ENCODE measurements at regions of chr6 and their contacts with region 1.

Region 1: GRCh38 chr6:112163295-112164257 is 76.2 kb downstream of the FAM229B start:
- DNase-seq: peak; percentile 84
- ATAC-seq: peak; percentile 99
- H3K4me3 Mint-ChIP-seq: peak overlapping the region; percentile 56
- H3K27ac Mint-ChIP-seq: no peak overlapping the region
- H3K4me1 Mint-ChIP-seq: peaks cover 17% of the 10 kb centered on the region
- H3K27me3 Mint-ChIP-seq: peaks cover 49% of the 10 kb centered on the region

Region 2: DNA sequence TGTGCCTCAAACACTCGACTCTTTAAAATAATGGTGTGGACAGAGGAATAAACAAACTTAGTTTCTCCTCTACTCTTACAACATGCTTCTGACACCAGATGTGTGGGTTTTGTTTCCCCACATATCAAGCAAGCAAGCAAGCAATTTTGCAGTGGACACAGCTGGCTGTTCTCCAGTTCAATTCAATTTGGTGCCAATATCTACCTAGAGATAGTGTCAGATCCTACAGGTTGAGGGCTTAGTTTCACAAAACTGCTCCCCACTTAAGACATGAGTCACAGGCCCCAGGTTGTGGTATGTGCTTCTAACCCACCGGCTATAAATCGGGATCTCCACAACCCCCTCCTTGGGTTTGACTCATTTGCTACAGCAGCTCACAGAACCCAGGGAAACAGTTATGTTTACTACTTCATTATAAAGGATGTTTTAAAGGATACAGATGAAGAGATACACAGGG is 426.5 kb before region 1 on chr6:
- CTCF ChIA-PET with region 1: no interaction called
- POLR2A ChIA-PET with region 1: no interaction called
- DNase-seq: no peak
- ATAC-seq: peak; percentile 71
- H3K4me3 Mint-ChIP-seq: no peak overlapping the region
- H3K27ac Mint-ChIP-seq: peak overlapping the region; percentile 70
- H3K4me1 Mint-ChIP-seq: peaks cover 88% of the 10 kb centered on the region
- H3K27me3 Mint-ChIP-seq: no peaks in the 10 kb centered on the region

Region 3: GRCh38 chr6:112049026-112049799 is 114.4 kb before region 1 on chr6:
- CTCF ChIA-PET with region 1: interaction called, 14 read pairs
- POLR2A ChIA-PET with region 1: no interaction called
- DNase-seq: no peak
- ATAC-seq: no peak
- H3K4me3 Mint-ChIP-seq: no peak overlapping the region
- H3K27ac Mint-ChIP-seq: no peak overlapping the region
- H3K4me1 Mint-ChIP-seq: peaks cover 4% of the 10 kb centered on the region
- H3K27me3 Mint-ChIP-seq: peaks cover 4% of the 10 kb centered on the region

Region 4: GRCh38 chr6:112087136-112087911 is 76.3 kb before region 1 on chr6 and contains the starts of genes FAM229B and TUBE1:
- CTCF ChIA-PET with region 1: interaction called, 99 read pairs
- POLR2A ChIA-PET with region 1: interaction called, 6 read pairs
- DNase-seq: peak; percentile 95
- ATAC-seq: peak; percentile 96
- H3K4me3 Mint-ChIP-seq: no peak within 1 kb of the TSS
- H3K27ac Mint-ChIP-seq: no peak within 1 kb of the TSS
- H3K4me1 Mint-ChIP-seq: peaks cover 3% of the 10 kb centered on the region
- H3K27me3 Mint-ChIP-seq: peaks cover 22% of the 10 kb centered on the region
- total RNA-seq, gene FAM229B: 1.9 to 2.2 TPM
- total RNA-seq, gene TUBE1: 16.0 to 16.5 TPM

Region 5: DNA sequence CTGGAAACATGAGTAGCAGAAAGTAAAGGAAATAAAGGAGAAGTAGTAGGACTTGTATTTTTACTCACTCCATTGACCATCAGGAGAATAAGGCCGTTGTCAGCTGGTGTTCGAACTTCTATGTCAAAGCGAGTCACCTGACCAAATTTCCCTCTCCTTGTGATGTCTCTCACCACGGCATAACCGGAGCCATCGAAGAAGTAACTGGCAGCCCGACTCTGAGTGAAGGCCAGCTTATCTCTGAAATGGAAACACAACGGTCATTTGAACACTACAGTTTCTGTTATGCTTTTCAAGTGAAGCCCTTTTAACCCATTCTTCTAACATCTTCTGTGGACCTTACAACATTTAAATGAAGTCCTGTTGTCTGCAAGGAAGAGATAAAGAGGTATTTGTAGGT is 24.5 kb before region 1 on chr6:
- CTCF ChIA-PET with region 1: interaction called, 13 read pairs
- POLR2A ChIA-PET with region 1: interaction called, 3 read pairs
- DNase-seq: no peak
- ATAC-seq: no peak
- H3K4me3 Mint-ChIP-seq: no peak overlapping the region
- H3K27ac Mint-ChIP-seq: no peak overlapping the region
- H3K4me1 Mint-ChIP-seq: no peaks in the 10 kb centered on the region
- H3K27me3 Mint-ChIP-seq: peaks cover 20% of the 10 kb centered on the region

Measured in activated CD8-positive, alpha-beta T cell treated with anti-CD3 and anti-CD28 coated beads, Interleukin-2, amount 10 ng/mL, durations not matched to agents 7 days and 5 days (primary cell).